ENCODE measurements at regions of chr14 and their contacts with region 1.

Region 1: DNA sequence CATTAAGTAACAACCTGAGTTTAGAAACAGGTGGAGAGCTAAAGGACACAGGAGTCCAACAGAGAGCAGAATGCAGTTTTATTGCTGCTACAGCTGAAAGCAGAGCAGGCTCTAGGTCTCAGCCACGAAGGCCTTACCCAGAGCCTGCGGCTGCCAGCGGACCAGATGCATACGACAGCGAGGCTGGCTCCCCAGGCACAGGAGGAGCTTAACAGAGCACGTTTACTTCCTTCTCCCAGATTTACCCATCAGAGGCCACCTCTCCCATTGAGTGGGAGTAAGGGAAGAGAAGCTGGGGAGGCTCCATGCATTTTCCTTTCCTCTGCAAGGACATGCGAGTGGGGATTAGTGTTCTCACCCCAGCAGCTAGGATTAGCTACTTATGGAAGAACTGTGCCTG is 22.6 kb downstream of the DYNC1H1 start:
- DNase-seq: no peak
- ATAC-seq: no peak
- H3K4me3 ChIP-seq: no peak overlapping the region
- H3K27ac ChIP-seq: no peak overlapping the region
- H3K4me1 ChIP-seq: no peaks in the 10 kb centered on the region
- H3K27me3 ChIP-seq: no peaks in the 10 kb centered on the region
- CTCF ChIP-seq: no peak
- POLR2A ChIP-seq: no peak

Region 2: DNA sequence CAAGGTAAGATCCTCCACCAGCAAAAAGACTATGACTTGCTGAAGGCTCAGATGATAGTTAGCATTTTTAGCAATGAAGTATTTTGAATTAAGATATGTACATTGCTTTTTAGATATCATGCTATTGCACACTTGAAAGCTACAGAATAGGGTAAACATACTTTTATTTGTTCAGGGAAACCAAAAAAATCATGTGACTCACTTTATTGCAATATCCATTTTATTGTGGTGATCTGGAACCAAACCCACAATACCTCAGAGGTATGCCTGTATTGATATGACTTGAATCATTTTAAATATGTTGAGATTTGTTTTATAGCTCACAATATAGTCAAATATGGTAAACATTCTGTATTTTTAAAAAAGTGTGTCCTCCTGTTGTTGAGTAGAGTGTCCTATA is 329.6 kb before region 1 on chr14:
- intact Hi-C with region 1: no loop called
- DNase-seq: no peak
- ATAC-seq: no peak
- H3K4me3 ChIP-seq: no peak overlapping the region
- H3K27ac ChIP-seq: no peak overlapping the region
- H3K4me1 ChIP-seq: no peaks in the 10 kb centered on the region
- H3K27me3 ChIP-seq: peaks cover 0 to 45% (median 0%) of the 10 kb centered on the region in 9 donors
- CTCF ChIP-seq: no peak
- POLR2A ChIP-seq: no peak

Region 3: GRCh38 chr14:101953151-101953550 is 33.8 kb before region 1 on chr14:
- intact Hi-C with region 1: no loop called
- DNase-seq: no peak
- ATAC-seq: no peak
- H3K4me3 ChIP-seq: no peak overlapping the region
- H3K27ac ChIP-seq: no peak overlapping the region
- H3K4me1 ChIP-seq: peaks cover 0 to 22% (median 12%) of the 10 kb centered on the region in 12 donors
- H3K27me3 ChIP-seq: no peaks in the 10 kb centered on the region
- CTCF ChIP-seq: no peak
- POLR2A ChIP-seq: no peak

Region 4: GRCh38 chr14:102020058-102020971 is 33.4 kb after region 1 on chr14:
- intact Hi-C with region 1: loop called in 2 of 10 experiments (anchors 5 kb)
- DNase-seq: no peak
- ATAC-seq: no peak
- H3K4me3 ChIP-seq: no peak overlapping the region
- H3K27ac ChIP-seq: no peak overlapping the region
- H3K4me1 ChIP-seq: no peaks in the 10 kb centered on the region
- H3K27me3 ChIP-seq: no peaks in the 10 kb centered on the region
- CTCF ChIP-seq: no peak
- POLR2A ChIP-seq: no peak

Region 5: GRCh38 chr14:102028421-102029172 is 41.6 kb after region 1 on chr14:
- intact Hi-C with region 1: loop called in 3 of 10 experiments (anchors 5 to 10 kb)
- DNase-seq: no peak
- ATAC-seq: peak in 2 of 4 donors; percentile 23 to 26
- H3K4me3 ChIP-seq: no peak overlapping the region
- H3K27ac ChIP-seq: no peak overlapping the region
- H3K4me1 ChIP-seq: no peaks in the 10 kb centered on the region
- H3K27me3 ChIP-seq: no peaks in the 10 kb centered on the region
- CTCF ChIP-seq: no peak
- POLR2A ChIP-seq: no peak